HCT116 (cell line): ENCODE measurements at regions of chr6 and their contacts with region 1.

Region 1: GRCh38 chr6:27608916-27609883 is 136.3 kb upstream of the ZNF184 start:
- DNase-seq: peak; percentile 72
- ATAC-seq: peak; percentile 62
- H3K4me3 ChIP-seq: no peak overlapping the region
- H3K27ac ChIP-seq: peak overlapping the region; percentile 47; the same call in 1 of the 2 replicates
- H3K4me1 ChIP-seq: peaks cover 9 to 36% of the 10 kb centered on the region in 2 experiments
- H3K27me3 ChIP-seq: no peaks in the 10 kb centered on the region
- CTCF ChIP-seq: peak; percentile 75 to 91 (median 83)
- POLR2A ChIP-seq: no peak
- RAD21 ChIP-seq: peak; percentile 85

Region 2: DNA sequence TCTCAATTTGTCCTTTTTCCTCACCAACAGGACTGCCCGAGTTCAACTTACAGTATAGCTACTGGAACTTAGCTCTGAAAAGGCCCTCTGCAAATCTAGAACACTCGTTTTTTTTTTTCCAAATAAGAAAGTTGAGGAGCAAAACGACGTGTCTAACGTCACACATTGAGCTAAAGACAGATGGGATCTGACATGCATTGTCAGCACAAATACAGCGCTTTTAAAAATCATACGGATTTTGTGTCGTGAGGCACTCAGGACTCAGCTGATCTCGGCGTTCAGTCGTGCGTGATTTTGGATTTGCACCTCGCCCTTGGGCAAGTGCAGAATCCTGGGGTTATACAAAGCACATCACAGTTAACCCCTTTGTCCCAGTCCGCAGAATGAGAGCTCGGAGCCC is 855.0 kb before region 1 on chr6:
- CTCF ChIA-PET with region 1: no interaction called
- POLR2A ChIA-PET with region 1: no interaction called
- RAD21 ChIA-PET with region 1: no interaction called
- intact Hi-C with region 1: no loop called
- DNase-seq: no peak
- ATAC-seq: no peak
- H3K4me3 ChIP-seq: no peak overlapping the region
- H3K27ac ChIP-seq: no peak overlapping the region
- H3K4me1 ChIP-seq: no peaks in the 10 kb centered on the region
- H3K27me3 ChIP-seq: no peaks in the 10 kb centered on the region
- CTCF ChIP-seq: no peak
- POLR2A ChIP-seq: no peak
- RAD21 ChIP-seq: no peak

Region 3: GRCh38 chr6:27188885-27189418 is 420.2 kb before region 1 on chr6:
- CTCF ChIA-PET with region 1: interaction called, 3 read pairs
- POLR2A ChIA-PET with region 1: no interaction called
- RAD21 ChIA-PET with region 1: no interaction called
- intact Hi-C with region 1: loop called (anchors 2 kb)
- DNase-seq: peak; percentile 64
- ATAC-seq: peak; percentile 91
- H3K4me3 ChIP-seq: peak overlapping the region; percentile 61 to 62
- H3K27ac ChIP-seq: peak overlapping the region; percentile 61
- H3K4me1 ChIP-seq: peaks cover 2 to 13% of the 10 kb centered on the region in 2 experiments; a peak in 3 of 4 replicates
- H3K27me3 ChIP-seq: no peaks in the 10 kb centered on the region
- CTCF ChIP-seq: peak; percentile 50 to 85 (median 70); a peak in 5 of 6 replicates
- POLR2A ChIP-seq: no peak
- RAD21 ChIP-seq: peak; percentile 95

Region 4: DNA sequence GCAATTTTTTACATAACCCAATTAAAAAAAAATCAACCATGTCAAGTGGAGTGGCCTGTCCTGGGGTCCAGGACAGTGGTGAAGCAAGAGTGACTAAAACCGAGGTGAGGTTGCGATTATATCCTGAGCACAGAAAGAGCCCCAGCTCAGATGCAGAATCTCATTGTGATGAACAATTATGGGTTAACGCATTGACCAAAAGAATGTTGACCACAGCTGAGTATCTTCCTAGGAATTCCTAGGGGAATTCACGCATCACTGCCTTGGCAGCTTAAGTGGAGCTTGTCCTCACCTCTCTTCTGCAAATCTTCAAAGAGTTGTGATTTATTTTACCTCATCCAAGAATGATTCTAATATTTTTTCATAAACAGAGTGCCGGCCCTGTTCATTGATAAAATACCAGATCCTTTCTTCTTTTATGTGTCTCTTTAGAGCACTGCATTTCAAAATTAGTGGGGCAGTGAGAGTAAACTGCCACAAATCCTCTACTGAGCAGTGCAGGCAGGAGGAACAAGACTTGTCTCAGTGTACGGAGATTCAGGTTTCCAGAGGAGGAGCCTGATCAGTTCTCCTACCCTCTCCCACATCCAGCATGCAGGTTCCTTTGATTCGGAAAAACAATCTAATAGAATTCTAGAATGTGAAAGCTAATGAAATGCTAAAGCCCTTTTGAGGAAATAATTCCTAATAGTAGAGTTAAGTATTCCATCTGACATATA is 76.2 kb before region 1 on chr6:
- CTCF ChIA-PET with region 1: interaction called, 4 read pairs
- POLR2A ChIA-PET with region 1: no interaction called
- RAD21 ChIA-PET with region 1: no interaction called
- intact Hi-C with region 1: loop called (anchors 5 kb)
- DNase-seq: peak; percentile 68
- ATAC-seq: peak; percentile 84
- H3K4me3 ChIP-seq: peak overlapping the region; percentile 27 to 49
- H3K27ac ChIP-seq: peak overlapping the region; percentile 54
- H3K4me1 ChIP-seq: peaks cover 21 to 33% of the 10 kb centered on the region in 2 experiments
- H3K27me3 ChIP-seq: no peaks in the 10 kb centered on the region
- CTCF ChIP-seq: no peak
- POLR2A ChIP-seq: no peak
- RAD21 ChIP-seq: no peak

Region 5: DNA sequence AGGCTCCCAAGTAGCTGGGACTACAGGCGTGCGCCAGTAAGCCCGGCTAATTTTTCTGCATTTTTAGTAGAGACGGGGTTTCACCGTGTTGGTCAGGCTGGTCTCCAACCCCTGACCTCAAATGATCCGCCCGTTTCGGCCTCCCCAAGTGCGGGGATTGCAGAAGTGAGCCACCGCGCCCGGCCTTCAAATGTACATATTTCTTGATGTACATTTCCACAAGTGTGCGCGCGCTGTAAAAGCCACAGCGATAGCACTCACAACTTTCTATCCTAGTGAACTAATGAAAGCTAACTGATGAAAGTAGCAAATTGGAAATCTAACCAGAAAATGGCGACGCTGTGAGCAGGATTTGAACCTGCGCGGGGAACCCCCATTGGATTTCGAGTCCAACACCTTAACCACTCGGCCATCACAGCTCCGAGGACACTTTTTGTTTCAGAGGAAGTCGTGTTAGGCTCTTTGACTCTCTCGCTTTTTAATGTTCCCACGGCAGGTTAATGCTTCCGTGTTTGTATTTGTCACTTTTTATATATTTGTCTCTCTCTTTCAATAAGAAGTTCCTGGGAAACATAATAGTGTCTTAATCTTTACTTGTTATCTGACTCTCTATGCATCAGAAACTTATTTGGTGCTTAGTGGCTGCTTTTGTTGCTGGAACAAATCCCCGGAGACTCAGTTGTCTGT is 63.1 kb after region 1 on chr6:
- CTCF ChIA-PET with region 1: interaction called, 3 read pairs
- POLR2A ChIA-PET with region 1: no interaction called
- RAD21 ChIA-PET with region 1: no interaction called
- intact Hi-C with region 1: loop called (anchors 5 kb)
- DNase-seq: peak; percentile 90
- ATAC-seq: peak; percentile 76
- H3K4me3 ChIP-seq: peak overlapping the region; percentile 17 to 51
- H3K27ac ChIP-seq: peak overlapping the region; percentile 67
- H3K4me1 ChIP-seq: peaks cover 17 to 42% of the 10 kb centered on the region in 2 experiments; a peak in 3 of 4 replicates
- H3K27me3 ChIP-seq: no peaks in the 10 kb centered on the region
- CTCF ChIP-seq: no peak
- POLR2A ChIP-seq: no peak
- RAD21 ChIP-seq: no peak; the same call in 1 of the 2 replicates

Region 6: DNA sequence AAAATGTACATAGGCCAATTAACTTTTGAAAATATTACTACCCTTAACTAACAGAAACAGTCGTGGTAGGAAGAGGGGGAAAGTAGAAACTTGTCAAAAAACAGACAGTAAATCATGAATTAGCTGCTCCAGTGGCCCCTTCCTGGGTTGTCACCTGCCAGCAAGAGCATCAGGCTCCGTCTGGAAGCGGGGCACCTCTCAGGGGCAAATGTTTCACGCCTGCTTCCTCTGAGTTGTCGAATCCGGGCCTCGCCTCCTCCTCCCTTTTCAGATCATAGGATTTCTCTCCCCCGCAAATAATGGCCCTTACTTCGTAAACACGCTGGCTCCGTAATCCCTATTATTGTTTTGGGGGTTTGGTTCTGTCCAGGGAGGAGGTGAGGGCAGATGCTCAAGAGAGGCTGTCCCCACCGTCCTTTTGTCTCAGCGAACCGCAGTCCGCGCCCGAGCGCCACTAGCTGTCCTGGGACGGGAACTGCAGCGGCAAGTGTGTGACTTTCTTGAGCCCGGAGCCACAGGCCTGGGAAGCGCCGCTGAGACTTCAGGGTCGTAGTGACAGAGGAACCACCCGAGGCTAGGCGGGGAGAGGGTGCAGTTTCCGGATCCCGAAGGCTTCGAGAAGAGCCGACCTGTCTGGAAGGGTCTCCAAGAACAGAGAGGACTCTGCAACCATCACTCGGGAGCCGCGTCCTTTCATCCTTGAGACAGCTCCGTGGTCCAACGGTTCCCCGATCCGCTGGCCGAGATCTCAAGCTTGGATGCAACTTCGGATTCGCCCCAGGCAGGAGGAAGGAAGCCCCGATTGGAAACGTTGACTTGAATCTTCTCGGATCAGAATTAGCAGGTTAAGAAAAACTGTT is 78.2 kb after region 1 on chr6:
- CTCF ChIA-PET with region 1: interaction called, 3 read pairs
- POLR2A ChIA-PET with region 1: no interaction called
- RAD21 ChIA-PET with region 1: interaction called in 1 of 2 experiments, 3 read pairs
- intact Hi-C with region 1: loop called (anchors 5 kb)
- DNase-seq: peak; percentile 79
- ATAC-seq: peak; percentile 70
- H3K4me3 ChIP-seq: peak overlapping the region; percentile 54 to 56
- H3K27ac ChIP-seq: peak overlapping the region; percentile 54
- H3K4me1 ChIP-seq: peaks cover 15 to 31% of the 10 kb centered on the region in 2 experiments
- H3K27me3 ChIP-seq: no peaks in the 10 kb centered on the region
- CTCF ChIP-seq: peak; percentile 55 to 81 (median 79); a peak in 5 of 6 replicates
- POLR2A ChIP-seq: no peak
- RAD21 ChIP-seq: peak; percentile 76

Region 7: GRCh38 chr6:27931209-27931608 is 322.0 kb after region 1 on chr6:
- CTCF ChIA-PET with region 1: no interaction called
- POLR2A ChIA-PET with region 1: no interaction called
- RAD21 ChIA-PET with region 1: no interaction called
- intact Hi-C with region 1: no loop called
- DNase-seq: no peak
- ATAC-seq: no peak
- H3K4me3 ChIP-seq: no peak overlapping the region
- H3K27ac ChIP-seq: no peak overlapping the region
- H3K4me1 ChIP-seq: no peaks in the 10 kb centered on the region
- H3K27me3 ChIP-seq: no peaks in the 10 kb centered on the region
- CTCF ChIP-seq: no peak
- POLR2A ChIP-seq: no peak
- RAD21 ChIP-seq: no peak

Region 8: GRCh38 chr6:28371706-28372451 is 762.7 kb after region 1 on chr6:
- CTCF ChIA-PET with region 1: no interaction called
- POLR2A ChIA-PET with region 1: no interaction called
- RAD21 ChIA-PET with region 1: no interaction called
- intact Hi-C with region 1: no loop called
- DNase-seq: no peak
- ATAC-seq: no peak
- H3K4me3 ChIP-seq: no peak overlapping the region
- H3K27ac ChIP-seq: no peak overlapping the region
- H3K4me1 ChIP-seq: no peaks in the 10 kb centered on the region
- H3K27me3 ChIP-seq: no peaks in the 10 kb centered on the region
- CTCF ChIP-seq: no peak
- POLR2A ChIP-seq: no peak
- RAD21 ChIP-seq: no peak